ENCODE measurements at regions of chr7 and their contacts with region 1.

Region 1: GRCh38 chr7:3517344-3517743 is 216.3 kb downstream of the SDK1 start:
- DNase-seq: no peak
- ATAC-seq: no peak
- H3K4me3 ChIP-seq: no peak overlapping the region
- H3K4me3 Mint-ChIP-seq: no peak overlapping the region
- H3K27ac ChIP-seq: no peak overlapping the region
- H3K27ac Mint-ChIP-seq: no peak overlapping the region
- H3K4me1 ChIP-seq: peaks cover 0 to 9% of the 10 kb centered on the region in 2 experiments
- H3K4me1 Mint-ChIP-seq: peaks cover 5 to 24% (median 12%) of the 10 kb centered on the region in 3 donors
- H3K27me3 ChIP-seq: no peaks in the 10 kb centered on the region
- H3K27me3 Mint-ChIP-seq: peaks cover 0 to 6% of the 10 kb centered on the region in 2 donors

Region 2: DNA sequence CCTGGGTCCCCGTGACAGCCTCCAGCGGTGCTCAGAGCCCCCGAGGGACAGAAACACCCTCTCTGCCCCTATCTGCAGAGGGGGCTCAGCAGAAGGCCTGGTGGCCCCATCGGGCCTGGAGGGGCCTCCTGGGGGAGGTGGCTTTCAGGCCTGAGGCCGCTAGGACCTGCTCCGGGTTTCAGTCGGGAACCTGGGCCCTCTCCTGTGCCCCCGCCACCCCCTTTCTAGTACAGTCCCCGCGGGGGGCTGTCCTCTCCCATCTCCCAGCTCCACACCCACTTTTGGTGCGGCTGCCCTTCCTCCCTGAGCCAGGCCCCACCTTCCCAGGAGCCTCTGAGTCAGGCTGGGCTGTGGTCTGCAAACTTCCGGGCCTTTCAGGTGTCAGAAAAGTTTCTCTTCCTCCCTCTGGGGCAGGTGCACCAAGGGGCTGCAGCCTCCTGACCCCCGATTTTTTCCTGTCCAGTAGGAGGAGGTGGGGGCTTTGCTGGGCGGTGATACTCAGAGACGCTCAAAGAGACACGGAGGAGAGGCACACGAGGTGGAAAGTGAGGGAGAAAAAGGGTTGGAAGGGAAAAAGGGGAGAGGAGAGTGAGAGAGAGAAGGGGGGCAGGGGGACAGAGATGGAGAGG is 474.4 kb before region 1 on chr7:
- CTCF ChIA-PET with region 1: no interaction called
- POLR2A ChIA-PET with region 1: interaction called in 1 of 2 experiments, 10 read pairs
- DNase-seq: peak; percentile 21 to 71 (median 46)
- ATAC-seq: peak; percentile 72 to 86 (median 80)
- H3K4me3 ChIP-seq: peak overlapping the region; percentile 78 to 90
- H3K4me3 Mint-ChIP-seq: peak overlapping the region; percentile 91 to 93 (median 92)
- H3K27ac ChIP-seq: peak overlapping the region; percentile 80
- H3K27ac Mint-ChIP-seq: peak overlapping the region; percentile 89 to 93
- H3K4me1 ChIP-seq: peaks cover 14 to 59% of the 10 kb centered on the region in 2 experiments
- H3K4me1 Mint-ChIP-seq: peaks cover 49 to 67% (median 57%) of the 10 kb centered on the region in 3 donors
- H3K27me3 ChIP-seq: no peaks in the 10 kb centered on the region
- H3K27me3 Mint-ChIP-seq: no peaks in the 10 kb centered on the region